ENCODE measurements at regions of chr16 and their contacts with region 1.

Region 1: DNA sequence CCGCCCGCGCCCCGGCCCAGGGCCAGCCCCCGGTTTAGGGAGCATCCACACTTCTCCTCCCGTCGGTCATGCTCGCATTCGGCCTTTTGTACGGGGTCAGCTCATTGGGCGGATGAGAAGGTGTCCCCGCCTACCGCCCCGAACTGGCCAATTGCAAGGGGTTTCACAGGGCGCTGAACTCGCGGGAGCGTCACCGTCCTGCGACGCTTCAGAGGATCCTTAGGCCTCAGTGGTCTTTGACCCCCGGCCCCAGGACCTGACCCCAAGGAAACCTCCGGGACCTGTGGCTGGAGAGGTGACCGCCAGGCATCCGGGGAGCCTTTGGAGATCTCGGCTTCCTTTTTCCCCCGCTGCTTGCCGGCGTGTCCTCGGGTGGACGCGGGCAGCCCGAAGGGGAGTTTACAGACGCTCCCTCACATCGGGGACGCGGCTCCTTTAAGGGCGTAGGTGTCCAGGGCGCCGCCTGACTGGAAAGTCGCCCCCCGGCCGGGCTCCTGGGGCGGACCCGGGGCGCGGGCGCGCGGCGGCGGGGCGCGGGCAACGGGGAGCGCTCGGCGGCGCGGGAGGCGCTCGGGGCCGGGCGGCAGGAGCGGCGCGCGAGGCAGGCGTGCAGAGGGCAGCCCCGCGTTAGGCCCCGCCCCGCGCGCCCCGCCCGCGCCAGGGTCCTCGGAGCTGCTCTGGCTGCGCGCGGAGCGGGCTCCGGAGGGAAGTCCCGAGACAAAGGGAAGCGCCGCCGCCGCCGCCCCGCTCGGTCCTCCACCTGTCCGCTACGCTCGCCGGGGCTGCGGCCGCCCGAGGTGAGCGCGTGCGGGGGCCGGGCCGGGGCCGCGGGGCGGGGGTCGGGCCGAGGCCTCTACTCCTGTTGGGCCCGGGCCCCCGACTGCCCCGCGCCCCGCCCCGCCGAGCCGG is at the start of gene UBE2I:
- DNase-seq: peak; percentile 98
- H3K4me3 Mint-ChIP-seq: peak within 1 kb of the TSS; percentile 98
- H3K27ac Mint-ChIP-seq: peak within 1 kb of the TSS; percentile 98
- H3K4me1 Mint-ChIP-seq: peaks cover 37% of the 10 kb centered on the region
- H3K27me3 Mint-ChIP-seq: no peaks in the 10 kb centered on the region
- total RNA-seq, gene UBE2I: 248 to 249 TPM

Region 2: GRCh38 chr16:1258906-1259759 is 50.1 kb before region 1 on chr16:
- CTCF ChIA-PET with region 1: no interaction called
- POLR2A ChIA-PET with region 1: no interaction called
- intact Hi-C with region 1: no loop called
- DNase-seq: no peak
- H3K4me3 Mint-ChIP-seq: no peak overlapping the region
- H3K27ac Mint-ChIP-seq: no peak overlapping the region
- H3K4me1 Mint-ChIP-seq: peaks cover 5% of the 10 kb centered on the region
- H3K27me3 Mint-ChIP-seq: peaks cover 24% of the 10 kb centered on the region

Region 3: DNA sequence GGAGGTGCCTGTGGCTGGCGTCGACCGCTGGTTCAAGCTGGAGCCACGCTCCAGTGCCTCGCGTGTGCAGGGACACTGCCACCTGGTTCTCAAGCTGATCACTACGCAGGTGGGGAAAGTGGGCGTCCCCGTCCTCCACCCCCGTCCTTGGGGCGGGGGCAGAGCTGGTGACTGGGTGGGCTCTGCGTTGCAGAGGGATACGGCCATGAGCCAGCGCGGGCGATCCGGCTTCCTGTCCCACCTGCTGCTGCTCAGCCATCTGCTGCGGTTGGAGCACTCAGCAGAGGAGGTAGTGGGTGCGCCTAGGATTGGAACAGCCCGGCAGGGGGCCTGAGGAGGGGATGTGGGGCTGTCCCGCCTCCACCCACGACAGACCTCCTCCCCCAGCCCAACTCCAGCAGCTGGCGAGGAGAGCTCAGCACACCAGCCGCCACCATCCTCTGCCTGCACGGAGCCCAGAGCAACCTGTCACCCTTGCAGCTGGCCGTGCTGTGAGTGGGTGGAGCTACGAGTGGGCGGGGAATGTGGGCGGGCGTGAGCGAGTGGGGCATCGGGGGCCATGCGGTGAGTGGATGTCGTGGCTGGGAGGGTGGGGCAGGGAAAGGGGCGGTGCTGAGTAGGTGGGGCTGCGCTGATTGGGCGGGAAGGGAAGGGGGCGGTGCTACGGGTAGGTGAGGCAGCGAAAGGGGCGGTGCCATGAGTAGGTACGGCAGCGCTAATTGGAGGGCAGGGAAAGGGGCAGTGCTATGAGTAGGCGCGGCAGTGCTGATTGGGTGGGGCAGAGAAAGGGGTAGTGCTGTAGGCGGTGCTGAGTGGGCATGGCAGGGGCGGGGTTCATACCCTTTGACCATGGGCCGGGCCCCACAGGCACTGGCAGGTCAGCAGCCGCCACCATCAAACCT is 33.5 kb after region 1 on chr16:
- CTCF ChIA-PET with region 1: no interaction called
- POLR2A ChIA-PET with region 1: interaction called, 7 read pairs
- intact Hi-C with region 1: loop called (anchors 2 kb)
- DNase-seq: peak; percentile 96
- H3K4me3 Mint-ChIP-seq: peak overlapping the region; percentile 49
- H3K27ac Mint-ChIP-seq: no peak overlapping the region
- H3K4me1 Mint-ChIP-seq: peaks cover 22% of the 10 kb centered on the region
- H3K27me3 Mint-ChIP-seq: no peaks in the 10 kb centered on the region

Measured in activated CD4-positive, alpha-beta memory T cell treated with anti-CD3 and anti-CD28 coated beads for 36 hours (primary cell).